Calu3 (cell line): ENCODE measurements at regions of chr21 and their contacts with region 1.

Region 1: GRCh38 chr21:41612674-41613532 is 104.9 kb upstream of the TMPRSS2 start:
- DNase-seq: peak; percentile 72
- H3K4me3 Mint-ChIP-seq: no peak overlapping the region
- H3K27ac Mint-ChIP-seq: no peak overlapping the region
- H3K4me1 Mint-ChIP-seq: peaks cover 18% of the 10 kb centered on the region
- H3K27me3 Mint-ChIP-seq: no peaks in the 10 kb centered on the region
- CTCF ChIP-seq: peak; percentile 76

Region 2: DNA sequence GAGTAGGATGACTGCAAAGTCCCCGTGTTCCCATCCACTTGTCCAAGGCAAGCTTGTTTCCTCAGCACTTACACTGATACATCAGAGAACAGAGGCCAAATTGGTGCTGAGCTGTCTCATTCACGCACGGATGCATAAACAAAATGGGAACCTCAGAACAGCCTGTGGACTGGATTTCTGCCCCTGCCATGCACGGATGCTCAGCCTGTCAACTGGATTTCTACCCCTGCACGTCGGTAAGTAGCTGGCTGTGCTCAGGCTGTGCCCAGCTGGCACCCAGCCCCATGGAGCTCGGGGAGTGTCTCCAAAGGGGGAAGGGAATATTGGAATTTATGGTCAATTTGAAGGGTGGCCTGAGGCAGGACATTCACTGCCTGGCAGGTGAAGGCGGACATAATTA is 64.1 kb before region 1 on chr21:
- CTCF ChIA-PET with region 1: no interaction called
- intact Hi-C with region 1: no loop called
- DNase-seq: no peak
- H3K4me3 Mint-ChIP-seq: no peak overlapping the region
- H3K27ac Mint-ChIP-seq: no peak overlapping the region
- H3K4me1 Mint-ChIP-seq: no peaks in the 10 kb centered on the region
- H3K27me3 Mint-ChIP-seq: peaks cover 29% of the 10 kb centered on the region
- CTCF ChIP-seq: no peak

Region 3: GRCh38 chr21:41559658-41560631 is 53.0 kb before region 1 on chr21:
- CTCF ChIA-PET with region 1: no interaction called
- intact Hi-C with region 1: no loop called
- DNase-seq: no peak
- H3K4me3 Mint-ChIP-seq: no peak overlapping the region
- H3K27ac Mint-ChIP-seq: no peak overlapping the region
- H3K4me1 Mint-ChIP-seq: peaks cover 40% of the 10 kb centered on the region
- H3K27me3 Mint-ChIP-seq: no peaks in the 10 kb centered on the region
- CTCF ChIP-seq: no peak

Region 4: DNA sequence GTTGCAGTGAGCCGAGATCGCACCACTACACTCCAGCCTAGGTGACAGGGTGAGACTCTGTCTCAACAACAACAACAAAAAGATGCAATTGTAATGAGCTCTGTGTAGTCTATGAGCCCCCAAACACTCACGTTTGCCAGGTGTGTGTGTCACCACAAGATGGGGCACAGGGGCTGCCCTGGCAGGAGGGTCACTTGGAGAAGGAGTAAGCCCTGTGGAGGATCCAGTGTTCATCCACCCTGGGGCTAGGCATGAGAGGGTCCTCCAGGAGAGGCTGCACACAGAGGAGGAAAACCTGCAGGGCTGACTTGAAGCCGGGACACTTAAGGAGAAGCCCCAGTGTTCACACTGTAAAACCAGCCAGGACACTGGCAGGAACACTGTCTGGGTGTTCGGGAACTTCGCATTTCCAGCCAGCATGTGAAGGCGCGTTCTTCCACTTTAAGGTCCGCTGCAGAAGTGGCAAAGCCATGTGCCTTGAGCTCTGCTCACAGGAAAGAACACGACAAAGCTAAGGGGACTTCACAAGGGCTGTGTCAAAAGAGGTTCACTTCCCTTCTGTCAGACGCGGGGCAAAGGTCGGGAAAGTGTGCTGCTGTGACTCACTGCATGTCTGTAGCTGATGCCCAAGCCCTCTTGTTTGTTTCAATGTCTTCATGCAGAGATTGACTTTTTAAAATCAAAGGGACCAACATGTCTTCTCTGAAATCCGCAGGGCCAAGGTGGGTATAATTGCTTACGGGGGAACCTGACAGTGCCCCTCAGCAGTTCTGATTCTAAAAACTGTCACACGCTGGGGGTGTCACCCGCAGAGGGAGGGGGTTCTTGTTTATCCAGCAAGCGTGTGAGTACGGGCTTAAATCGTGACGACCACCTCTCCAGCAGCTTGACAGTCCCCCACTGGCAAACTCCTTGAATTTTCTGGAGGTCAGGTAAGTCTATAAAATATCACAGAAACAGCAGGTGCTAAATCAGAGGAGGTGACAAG is 51.2 kb after region 1 on chr21:
- CTCF ChIA-PET with region 1: interaction called, 5 read pairs
- intact Hi-C with region 1: loop called (anchors 5 kb)
- DNase-seq: peak; percentile 64
- H3K4me3 Mint-ChIP-seq: peak overlapping the region; percentile 54
- H3K27ac Mint-ChIP-seq: peak overlapping the region; percentile 88
- H3K4me1 Mint-ChIP-seq: peaks cover 32% of the 10 kb centered on the region
- H3K27me3 Mint-ChIP-seq: no peaks in the 10 kb centered on the region
- CTCF ChIP-seq: no peak

Region 5: GRCh38 chr21:41726945-41727783 is 114.3 kb after region 1 on chr21:
- CTCF ChIA-PET with region 1: interaction called, 7 read pairs
- intact Hi-C with region 1: loop called (anchors 10 kb)
- DNase-seq: peak; percentile 72
- H3K4me3 Mint-ChIP-seq: peak overlapping the region; percentile 47
- H3K27ac Mint-ChIP-seq: peak overlapping the region; percentile 84
- H3K4me1 Mint-ChIP-seq: peaks cover 23% of the 10 kb centered on the region
- H3K27me3 Mint-ChIP-seq: no peaks in the 10 kb centered on the region
- CTCF ChIP-seq: no peak

Region 6: DNA sequence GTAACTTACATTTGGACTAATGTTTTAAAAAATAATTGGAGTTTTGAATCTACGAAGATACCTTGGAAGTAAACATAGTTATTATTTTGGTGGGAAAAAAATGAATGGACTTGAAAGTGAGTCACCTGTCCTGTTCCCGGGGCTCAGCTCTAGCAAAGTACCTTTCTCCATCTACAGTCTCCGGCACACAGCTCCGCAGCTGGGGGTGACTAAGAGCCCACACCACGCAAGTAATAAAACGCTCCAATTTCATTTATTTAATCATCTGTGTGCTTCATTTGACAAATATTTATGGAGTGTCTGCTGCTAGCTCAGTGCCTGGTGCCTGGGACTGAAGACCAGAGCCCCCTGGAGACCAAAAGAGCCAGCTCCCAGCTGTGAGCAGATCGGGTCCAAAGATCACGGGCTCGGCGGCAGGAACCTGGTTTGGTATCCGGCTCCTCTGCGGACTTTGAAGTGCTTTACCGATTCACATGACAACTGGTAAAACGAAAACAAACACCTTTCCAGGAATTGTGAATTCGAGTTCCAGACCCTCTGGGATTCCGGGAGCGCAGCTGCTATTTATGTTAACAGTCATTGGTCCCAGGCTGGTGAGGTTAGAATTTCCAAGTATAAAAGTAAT is 155.6 kb after region 1 on chr21:
- CTCF ChIA-PET with region 1: interaction called, 13 read pairs
- intact Hi-C with region 1: no loop called
- DNase-seq: peak; percentile 73
- H3K4me3 Mint-ChIP-seq: peak overlapping the region; percentile 76
- H3K27ac Mint-ChIP-seq: peak overlapping the region; percentile 96
- H3K4me1 Mint-ChIP-seq: peaks cover 33% of the 10 kb centered on the region
- H3K27me3 Mint-ChIP-seq: no peaks in the 10 kb centered on the region
- CTCF ChIP-seq: peak; percentile 29

Region 7: DNA sequence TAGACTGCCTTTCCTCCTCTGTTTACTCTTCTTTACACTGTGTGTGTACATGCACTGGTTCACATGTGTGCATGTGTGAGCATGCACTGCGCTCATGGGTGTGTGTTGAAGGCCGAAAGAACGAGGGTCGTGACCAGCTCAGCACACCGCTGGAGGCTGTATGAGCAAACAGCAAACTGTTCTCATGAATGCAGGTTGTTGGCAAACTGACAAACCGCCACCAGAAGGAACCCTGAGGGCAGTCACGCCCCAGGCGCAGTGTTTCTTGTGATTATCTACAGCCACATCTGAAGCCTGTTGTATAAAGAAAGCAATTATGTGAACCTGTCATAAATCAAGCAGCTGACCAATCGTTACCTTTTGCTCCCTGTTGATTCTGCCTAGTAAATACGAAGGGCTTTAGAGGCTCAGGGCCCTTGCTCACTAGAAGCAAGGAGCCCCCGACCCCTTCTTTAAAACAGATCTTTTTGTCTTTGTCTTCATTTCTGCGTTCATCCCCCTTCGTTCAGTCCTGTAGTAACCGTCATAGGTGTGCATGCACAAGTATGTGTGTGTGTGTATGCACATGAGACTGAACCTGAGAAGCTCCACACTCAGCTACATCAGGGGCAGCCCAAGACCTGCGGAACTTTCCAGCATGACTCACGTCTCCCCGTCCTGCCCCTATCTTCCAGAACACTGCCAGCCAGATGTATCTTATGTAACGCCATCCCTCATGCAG is 170.7 kb after region 1 on chr21:
- CTCF ChIA-PET with region 1: interaction called, 22 read pairs
- intact Hi-C with region 1: loop called (anchors 1 kb)
- DNase-seq: peak; percentile 86
- H3K4me3 Mint-ChIP-seq: peak overlapping the region; percentile 15
- H3K27ac Mint-ChIP-seq: peak overlapping the region; percentile 62
- H3K4me1 Mint-ChIP-seq: peaks cover 50% of the 10 kb centered on the region
- H3K27me3 Mint-ChIP-seq: no peaks in the 10 kb centered on the region
- CTCF ChIP-seq: no peak